ENCODE measurements at regions of chr9 and their contacts with region 1.

Region 1: DNA sequence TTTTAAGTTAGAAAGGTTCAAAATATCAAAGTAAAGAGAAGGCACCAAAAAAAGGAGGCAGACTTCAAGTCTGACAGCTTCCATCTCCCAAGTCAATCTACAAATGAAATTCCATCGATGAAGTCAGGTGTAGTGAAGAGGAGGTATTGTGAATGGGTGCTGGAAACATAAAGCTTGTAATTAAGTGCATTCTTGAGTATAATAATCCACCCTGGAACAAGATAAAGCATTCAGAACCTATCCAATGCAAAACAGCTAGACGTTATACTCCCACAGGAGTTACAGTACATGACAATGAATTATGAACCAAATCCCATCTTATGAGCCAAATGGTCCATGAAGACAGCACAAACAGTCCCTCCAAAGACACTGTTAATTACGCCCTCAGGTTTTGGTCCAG is 22.3 kb downstream of the BNC2 start:
- DNase-seq: no peak
- H3K4me3 ChIP-seq: no peak overlapping the region
- H3K27ac ChIP-seq: no peak overlapping the region
- H3K4me1 ChIP-seq: peaks cover 2% of the 10 kb centered on the region
- H3K27me3 ChIP-seq: no peaks in the 10 kb centered on the region
- CTCF ChIP-seq: no peak
- EP300 ChIP-seq: no peak
- POLR2A ChIP-seq: no peak

Region 2: GRCh38 chr9:16787724-16788123 is 60.5 kb before region 1 on chr9:
- intact Hi-C with region 1: loop called in 1 of 4 experiments (anchors 10 kb)
- DNase-seq: no peak
- H3K4me3 ChIP-seq: no peak overlapping the region
- H3K27ac ChIP-seq: no peak overlapping the region
- H3K4me1 ChIP-seq: peaks cover 10% of the 10 kb centered on the region
- H3K27me3 ChIP-seq: no peaks in the 10 kb centered on the region
- CTCF ChIP-seq: no peak
- EP300 ChIP-seq: no peak
- POLR2A ChIP-seq: no peak

Region 3: GRCh38 chr9:16809912-16810610 is 38.1 kb before region 1 on chr9:
- intact Hi-C with region 1: loop called in 1 of 4 experiments (anchors 10 kb)
- DNase-seq: no peak
- H3K4me3 ChIP-seq: no peak overlapping the region
- H3K27ac ChIP-seq: no peak overlapping the region
- H3K4me1 ChIP-seq: peaks cover 1% of the 10 kb centered on the region
- H3K27me3 ChIP-seq: no peaks in the 10 kb centered on the region
- CTCF ChIP-seq: no peak
- EP300 ChIP-seq: no peak
- POLR2A ChIP-seq: no peak

Region 4: DNA sequence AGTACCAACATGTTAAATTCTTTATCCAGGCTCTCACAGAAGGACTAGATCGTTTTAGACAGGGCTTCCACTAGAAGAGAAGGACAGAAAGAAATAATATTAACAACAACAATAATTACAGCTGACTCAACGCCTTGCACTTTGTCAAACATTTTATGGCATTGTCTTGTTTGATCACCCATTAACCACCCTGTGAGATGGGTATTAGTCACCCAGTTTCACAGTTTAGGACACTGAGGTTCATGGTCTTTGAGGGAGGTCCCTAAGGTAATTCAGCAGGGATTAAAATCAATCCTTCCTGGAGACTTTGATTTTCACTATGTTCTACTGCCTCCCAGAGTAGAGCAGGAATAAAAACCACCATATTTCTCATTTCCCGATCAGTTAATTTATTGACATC is 73.7 kb after region 1 on chr9:
- intact Hi-C with region 1: no loop called
- DNase-seq: no peak
- H3K4me3 ChIP-seq: no peak overlapping the region
- H3K27ac ChIP-seq: no peak overlapping the region
- H3K4me1 ChIP-seq: no peaks in the 10 kb centered on the region
- H3K27me3 ChIP-seq: no peaks in the 10 kb centered on the region
- CTCF ChIP-seq: no peak
- EP300 ChIP-seq: no peak
- POLR2A ChIP-seq: no peak